ENCODE measurements at regions of chr9 and their contacts with region 1.

Region 1: DNA sequence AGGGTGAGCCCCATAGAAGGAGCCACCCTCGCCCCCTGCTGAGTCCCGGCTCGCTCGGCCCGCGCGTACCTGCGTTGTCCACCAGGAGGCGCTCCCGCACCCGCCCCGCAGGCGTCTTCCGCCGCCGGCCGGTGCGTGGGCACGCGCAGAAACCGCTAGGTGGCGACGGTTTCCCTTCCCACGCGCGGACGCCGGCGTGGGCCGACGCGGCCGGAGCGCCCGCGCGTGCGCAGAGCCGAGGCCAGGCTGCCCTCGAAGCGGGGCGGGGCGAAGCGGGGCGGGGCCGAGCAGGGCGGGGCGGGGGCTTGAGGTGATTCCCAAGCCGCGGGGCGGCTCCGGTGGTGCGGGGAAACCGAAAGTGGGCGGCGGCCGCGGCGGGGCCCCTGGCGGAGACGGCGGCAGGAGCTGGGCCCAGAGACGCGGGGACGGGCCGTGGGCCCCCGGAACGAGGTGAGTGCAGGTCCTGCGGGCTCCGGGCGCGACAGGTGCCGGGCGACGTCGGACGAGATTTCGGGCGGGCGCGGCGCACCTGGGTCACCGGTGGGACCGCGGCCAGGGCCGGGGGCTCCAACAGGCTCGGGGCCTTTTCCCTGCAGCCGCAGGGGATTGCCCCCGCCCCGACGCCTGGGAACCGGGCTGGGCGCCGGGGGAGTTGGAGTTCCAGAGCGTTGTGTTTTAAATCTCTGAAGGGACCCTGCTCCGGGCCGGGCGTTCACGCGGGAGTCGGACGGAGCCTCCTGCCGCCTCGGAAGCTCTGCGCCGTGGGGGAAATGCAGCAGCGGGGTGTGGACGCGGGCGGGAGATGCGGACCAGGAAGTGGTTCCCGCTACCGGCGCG is at the start of gene TDRD7:
- DNase-seq: peak; percentile 88
- H3K4me3 ChIP-seq: peak within 1 kb of the TSS; percentile 91
- H3K27ac ChIP-seq: no peak within 1 kb of the TSS
- H3K4me1 ChIP-seq: peaks cover 20% of the 10 kb centered on the region
- CTCF ChIP-seq: peak; percentile 88
- total RNA-seq, gene TDRD7: 4.0 and 5.5 TPM in 2 replicates

Region 2: DNA sequence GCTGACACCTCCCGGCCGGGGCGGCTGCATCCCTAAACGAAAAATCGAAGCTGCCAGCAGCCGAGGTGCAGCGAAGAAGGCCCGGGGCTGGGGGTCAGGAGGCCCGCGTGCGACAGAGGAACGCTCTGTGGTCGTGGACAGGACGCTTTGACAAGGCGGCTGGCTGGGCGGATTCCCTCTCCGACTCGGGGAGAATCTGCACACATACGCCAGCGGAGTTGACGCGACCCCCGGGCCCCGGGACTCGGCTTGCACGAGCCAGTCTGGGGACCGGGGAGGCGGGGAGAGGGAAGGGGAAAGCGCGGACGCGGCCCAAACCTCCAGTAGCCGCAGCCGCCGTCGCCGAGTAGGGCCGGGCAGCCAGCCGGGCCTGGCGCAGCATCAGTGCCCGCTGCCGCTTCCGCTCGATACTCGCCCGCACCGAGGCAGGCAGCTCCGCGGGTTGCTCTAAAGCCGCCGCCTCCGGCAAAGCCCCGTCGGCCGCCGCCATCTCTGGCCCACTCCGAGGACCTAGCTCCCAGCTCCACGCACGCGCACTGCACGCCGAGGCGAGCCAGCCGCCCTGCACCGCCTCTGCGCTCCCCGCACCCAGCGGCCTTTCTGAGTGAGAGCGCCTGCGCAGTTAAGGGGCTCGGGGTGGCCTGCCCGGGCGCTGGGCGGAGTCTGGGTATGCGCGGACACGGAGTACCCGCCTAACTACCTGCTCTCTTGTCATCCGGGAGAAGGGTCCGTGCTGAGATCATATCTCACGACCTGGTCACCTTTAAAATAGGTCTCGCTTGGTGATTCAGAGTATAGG is 285.0 kb after region 1 on chr9 and contains the start of gene XPA:
- CTCF ChIA-PET with region 1: no interaction called
- POLR2A ChIA-PET with region 1: no interaction called
- intact Hi-C with region 1: loop called (anchors 2 kb)
- DNase-seq: peak; percentile 96
- H3K4me3 ChIP-seq: peak within 1 kb of the TSS; percentile 85
- H3K27ac ChIP-seq: peak within 1 kb of the TSS; percentile 62
- H3K4me1 ChIP-seq: peaks cover 47% of the 10 kb centered on the region
- CTCF ChIP-seq: 0 out of 2 replicates have a peak, but pooled peaks have one; percentile 23
- total RNA-seq, gene XPA: 15.8 and 17.8 TPM in 2 replicates

Measured in OCI-LY7 (cell line).